ENCODE measurements at regions of chr11 and their contacts with region 1.

Region 1: GRCh38 chr11:62645956-62646824 is at the start of gene GANAB:
- DNase-seq: peak; percentile 99 to 100 (median 99)
- ATAC-seq: peak; percentile 98 to 99 (median 98)
- H3K4me3 ChIP-seq: peak within 1 kb of the TSS; percentile 63 to 100 (median 88)
- H3K27ac ChIP-seq: peak within 1 kb of the TSS; percentile 67 to 98 (median 94)
- H3K4me1 ChIP-seq: peaks cover 0 to 34% (median 21%) of the 10 kb centered on the region in 12 donors
- H3K27me3 ChIP-seq: no peaks in the 10 kb centered on the region
- CTCF ChIP-seq: peak in 1 of 12 donors; percentile 3
- POLR2A ChIP-seq: peak in 1 of 2 donors; percentile 64
- total RNA-seq, gene GANAB: 64.4 to 182 (median 99.1) TPM

Region 2: GRCh38 chr11:62612366-62613290 is 33.6 kb before region 1 on chr11 and contains the starts of genes EML3 and ROM1:
- intact Hi-C with region 1: loop called in 3 of 10 experiments (anchors 5 kb)
- DNase-seq: peak; percentile 91 to 95 (median 94)
- ATAC-seq: peak; percentile 80 to 91 (median 90)
- H3K4me3 ChIP-seq: peak within 1 kb of the TSS; percentile 70 to 99 (median 82)
- H3K27ac ChIP-seq: peak within 1 kb of the TSS; percentile 91 to 99 (median 98)
- H3K4me1 ChIP-seq: peaks cover 4 to 39% (median 18%) of the 10 kb centered on the region in 12 donors
- H3K27me3 ChIP-seq: no peaks in the 10 kb centered on the region
- CTCF ChIP-seq: peak; percentile 78 to 100 (median 92)
- POLR2A ChIP-seq: peak in 1 of 2 donors; percentile 33
- total RNA-seq, gene EML3: 8.8 to 40.9 (median 16.2) TPM
- total RNA-seq, gene ROM1: 1.5 to 5.8 (median 2.1) TPM

Region 3: GRCh38 chr11:62622476-62623089 is 23.6 kb before region 1 on chr11:
- intact Hi-C with region 1: loop called in 1 of 10 experiments (anchors 1 kb)
- DNase-seq: no peak
- ATAC-seq: no peak
- H3K4me3 ChIP-seq: peak overlapping the region in 10 of 12 donors; percentile 64 to 94 (median 80)
- H3K27ac ChIP-seq: peak overlapping the region in 11 of 12 donors; percentile 77 to 96 (median 88)
- H3K4me1 ChIP-seq: peaks cover 0 to 28% (median 14%) of the 10 kb centered on the region in 12 donors
- H3K27me3 ChIP-seq: no peaks in the 10 kb centered on the region
- CTCF ChIP-seq: no peak
- POLR2A ChIP-seq: no peak

Region 4: GRCh38 chr11:62665075-62665598 is 18.9 kb after region 1 on chr11 and contains the starts of genes C11orf98 and CSKMT:
- intact Hi-C with region 1: loop called in 1 of 10 experiments (anchors 2 kb)
- DNase-seq: peak; percentile 95 to 97 (median 95)
- ATAC-seq: peak; percentile 97 to 98 (median 98)
- H3K4me3 ChIP-seq: peak within 1 kb of the TSS; percentile 53 to 92 (median 83)
- H3K27ac ChIP-seq: peak within 1 kb of the TSS; percentile 30 to 98 (median 90)
- H3K4me1 ChIP-seq: peaks cover 5 to 45% (median 32%) of the 10 kb centered on the region in 12 donors
- H3K27me3 ChIP-seq: no peaks in the 10 kb centered on the region
- CTCF ChIP-seq: no peak
- POLR2A ChIP-seq: peak; percentile 91 to 97
- total RNA-seq, gene C11orf98: 24.0 to 56.2 (median 28.5) TPM
- total RNA-seq, gene CSKMT: 0.38 to 8.7 (median 4.2) TPM